ENCODE measurements at regions of chr13 and their contacts with region 1.

Region 1: DNA sequence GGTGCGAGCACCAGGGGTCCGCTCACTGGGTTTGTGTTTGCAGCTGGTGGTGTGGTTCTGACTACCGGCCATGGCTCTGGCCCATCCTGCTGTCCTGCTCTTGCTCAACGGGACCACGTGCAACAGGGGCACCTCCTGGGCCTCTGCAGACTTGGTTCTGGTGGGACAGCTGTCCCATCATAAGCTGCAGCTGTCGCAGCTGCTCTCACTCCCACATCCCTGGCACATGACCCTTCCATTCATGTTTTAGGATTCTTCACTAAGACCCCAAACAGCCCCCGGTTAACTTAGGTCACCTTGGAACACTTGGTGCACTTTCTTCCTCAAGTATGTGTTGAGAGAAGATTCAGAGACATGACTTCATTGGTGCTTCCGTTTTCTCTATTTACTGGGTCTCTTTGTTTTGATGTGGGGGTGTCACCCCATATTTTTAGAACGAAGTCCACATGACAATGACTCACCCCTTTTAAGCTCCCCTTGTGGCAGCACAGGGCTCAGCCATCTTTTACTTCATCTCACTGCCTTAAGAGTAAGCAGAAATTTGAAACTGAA is 68.4 kb upstream of the ARHGEF7 start:
- DNase-seq: no peak
- H3K4me3 ChIP-seq: no peak overlapping the region
- H3K27ac ChIP-seq: peak overlapping the region; percentile 32 to 47
- H3K4me1 ChIP-seq: peaks cover 0 to 13% (median 3%) of the 10 kb centered on the region in 4 donors
- H3K27me3 ChIP-seq: no peaks in the 10 kb centered on the region
- CTCF ChIP-seq: peak; percentile 17 to 40

Region 2: GRCh38 chr13:110615322-110616102 is 431.2 kb before region 1 on chr13 and contains the start of gene NAXD:
- intact Hi-C with region 1: loop called (anchors 10 kb)
- DNase-seq: peak; percentile 92 to 96
- H3K4me3 ChIP-seq: peak within 1 kb of the TSS; percentile 87 to 88
- H3K27ac ChIP-seq: peak within 1 kb of the TSS; percentile 95 to 97
- H3K4me1 ChIP-seq: peaks cover 8 to 38% (median 24%) of the 10 kb centered on the region in 4 donors
- H3K27me3 ChIP-seq: no peaks in the 10 kb centered on the region
- CTCF ChIP-seq: peak in 1 of 2 experiments; percentile 21

Region 3: GRCh38 chr13:110937511-110938285 is 109.0 kb before region 1 on chr13:
- intact Hi-C with region 1: loop called (anchors 5 kb)
- DNase-seq: no peak
- H3K4me3 ChIP-seq: no peak overlapping the region
- H3K27ac ChIP-seq: no peak overlapping the region
- H3K4me1 ChIP-seq: no peaks in the 10 kb centered on the region
- H3K27me3 ChIP-seq: no peaks in the 10 kb centered on the region
- CTCF ChIP-seq: no peak

Region 4: GRCh38 chr13:111281751-111282311 is 235.2 kb after region 1 on chr13:
- intact Hi-C with region 1: no loop called
- DNase-seq: no peak
- H3K4me3 ChIP-seq: no peak overlapping the region
- H3K27ac ChIP-seq: peak overlapping the region; percentile 71 to 80
- H3K4me1 ChIP-seq: peaks cover 0 to 65% (median 39%) of the 10 kb centered on the region in 4 donors
- H3K27me3 ChIP-seq: no peaks in the 10 kb centered on the region
- CTCF ChIP-seq: no peak

Region 5: DNA sequence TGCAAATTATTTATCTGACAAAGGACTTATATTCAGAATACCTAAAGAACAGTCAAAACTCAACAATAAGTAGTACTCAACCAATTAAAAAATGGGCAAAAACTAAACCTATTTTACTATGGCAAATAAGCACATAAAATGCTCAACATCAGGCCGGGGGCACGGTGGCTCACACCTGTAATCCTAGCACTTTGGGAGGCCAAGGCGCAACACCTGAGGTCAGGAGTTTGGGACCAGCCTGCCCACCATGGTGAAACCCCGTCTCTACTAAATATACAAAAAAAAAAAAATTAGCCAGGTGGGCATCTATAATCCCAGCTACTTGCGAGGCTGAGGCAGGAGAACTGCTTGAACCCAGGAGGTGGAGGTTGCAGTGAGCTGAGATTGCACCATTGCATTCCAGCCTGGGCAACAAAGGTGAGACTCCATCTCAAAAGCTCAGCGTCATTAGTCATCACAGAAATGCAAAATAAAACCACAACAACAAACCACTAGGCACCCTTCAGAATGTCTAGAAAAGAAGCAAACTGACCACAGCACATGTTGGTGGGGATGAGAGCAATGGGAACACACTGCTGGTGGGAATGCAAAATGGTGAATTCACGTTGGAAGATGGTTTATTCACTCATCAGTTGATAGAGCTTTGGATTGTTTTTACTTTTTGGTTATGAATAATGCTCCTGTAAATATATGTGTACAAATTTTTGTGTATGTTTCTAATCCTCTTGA is 839.7 kb after region 1 on chr13:
- intact Hi-C with region 1: loop called (anchors 5 kb)
- DNase-seq: no peak
- H3K4me3 ChIP-seq: no peak overlapping the region
- H3K27ac ChIP-seq: no peak overlapping the region
- H3K4me1 ChIP-seq: no peaks in the 10 kb centered on the region
- H3K27me3 ChIP-seq: no peaks in the 10 kb centered on the region
- CTCF ChIP-seq: no peak